HEK293T (cell line): ENCODE measurements at regions of chr3 and their contacts with region 1.

Region 1: DNA sequence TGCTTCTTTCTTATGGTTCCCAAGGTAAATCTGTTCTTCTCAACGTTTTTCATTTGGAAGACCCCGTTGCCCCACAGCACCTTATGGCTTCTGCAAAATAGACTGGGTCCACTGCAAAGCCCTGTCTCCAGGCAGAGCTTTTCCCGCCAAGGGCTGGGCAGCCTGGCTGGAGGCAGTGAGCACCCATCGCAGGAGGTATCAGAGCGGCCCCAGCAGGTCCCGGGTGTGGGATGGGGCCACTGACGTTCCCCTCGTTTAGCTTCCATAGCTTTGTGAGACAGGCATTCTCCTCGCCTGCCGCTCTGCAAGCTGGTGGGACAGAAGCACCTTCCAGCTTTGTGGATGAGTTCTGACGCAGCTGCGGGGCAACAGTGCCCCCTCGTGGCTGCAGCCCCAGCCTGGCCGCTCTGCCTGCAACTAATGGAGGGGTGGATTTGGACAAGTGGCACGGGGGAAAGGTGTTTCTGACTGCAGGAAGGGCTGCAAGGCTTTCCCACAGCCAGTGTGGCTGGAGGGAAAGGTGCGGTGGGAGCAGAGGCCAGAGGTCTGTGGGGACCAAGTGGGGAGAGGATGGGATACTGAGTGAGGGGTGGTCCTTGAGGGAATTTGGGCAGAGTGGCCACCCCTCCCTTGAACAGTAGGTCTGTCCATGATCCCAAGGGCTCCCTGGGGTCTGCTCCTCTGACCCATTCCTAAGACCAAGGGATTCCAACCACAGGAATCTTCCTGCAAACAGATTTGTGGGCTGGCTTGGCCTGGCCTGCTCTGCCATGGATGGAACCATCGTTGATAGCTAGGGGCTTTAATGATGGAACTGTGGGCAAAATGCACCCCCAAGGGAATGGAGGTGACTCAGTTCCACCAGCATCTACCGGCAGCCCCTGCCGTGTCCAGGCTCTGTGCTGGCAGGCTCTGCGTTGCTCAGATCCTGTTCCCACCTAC is 99.4 kb downstream of the FBLN2 start:
- DNase-seq: peak; percentile 90

Region 2: DNA sequence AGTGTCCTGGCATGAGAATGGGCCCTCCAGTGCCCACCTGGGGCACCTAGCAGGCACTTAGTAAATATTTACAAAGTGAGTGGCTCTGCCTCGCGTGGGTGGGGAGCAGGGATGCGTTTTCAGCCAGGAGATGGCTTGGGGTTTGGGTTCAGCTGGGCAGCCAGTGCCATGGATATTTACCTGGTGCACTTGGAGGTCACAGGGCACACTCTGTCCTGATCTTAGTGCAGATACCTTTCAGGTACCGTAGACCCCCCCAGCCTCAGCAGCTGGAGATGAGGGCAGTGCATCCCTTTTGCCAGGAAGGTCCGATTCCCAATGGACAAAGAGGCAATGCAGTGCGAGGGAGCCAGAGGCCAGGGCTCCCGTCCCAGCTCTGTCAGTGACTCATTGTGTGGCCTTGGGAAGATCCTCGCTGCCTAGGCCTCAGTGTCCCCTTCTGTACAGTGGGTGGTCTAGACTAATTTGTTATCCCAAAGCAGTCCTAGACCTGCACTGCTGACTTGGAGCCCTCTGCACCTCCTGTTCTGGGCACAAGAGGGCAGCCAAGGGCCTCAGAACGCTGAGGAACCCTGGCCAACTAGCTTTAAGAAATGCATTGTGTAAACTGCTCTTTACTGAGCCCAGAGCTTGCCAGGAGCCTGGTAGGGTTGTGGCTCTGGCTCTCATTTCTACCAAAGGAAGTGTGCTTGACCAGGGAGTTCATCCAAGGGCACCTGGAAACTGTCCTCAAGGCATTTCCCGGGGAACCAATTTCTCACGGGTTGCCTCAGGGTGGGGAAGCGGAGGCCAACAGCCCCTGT is 152.2 kb before region 1 on chr3:
- CTCF ChIA-PET with region 1: interaction called, 56 read pairs
- POLR2A ChIA-PET with region 1: no interaction called
- DNase-seq: peak; percentile 72